ENCODE measurements at regions of chr17 and their contacts with region 1.

Region 1: DNA sequence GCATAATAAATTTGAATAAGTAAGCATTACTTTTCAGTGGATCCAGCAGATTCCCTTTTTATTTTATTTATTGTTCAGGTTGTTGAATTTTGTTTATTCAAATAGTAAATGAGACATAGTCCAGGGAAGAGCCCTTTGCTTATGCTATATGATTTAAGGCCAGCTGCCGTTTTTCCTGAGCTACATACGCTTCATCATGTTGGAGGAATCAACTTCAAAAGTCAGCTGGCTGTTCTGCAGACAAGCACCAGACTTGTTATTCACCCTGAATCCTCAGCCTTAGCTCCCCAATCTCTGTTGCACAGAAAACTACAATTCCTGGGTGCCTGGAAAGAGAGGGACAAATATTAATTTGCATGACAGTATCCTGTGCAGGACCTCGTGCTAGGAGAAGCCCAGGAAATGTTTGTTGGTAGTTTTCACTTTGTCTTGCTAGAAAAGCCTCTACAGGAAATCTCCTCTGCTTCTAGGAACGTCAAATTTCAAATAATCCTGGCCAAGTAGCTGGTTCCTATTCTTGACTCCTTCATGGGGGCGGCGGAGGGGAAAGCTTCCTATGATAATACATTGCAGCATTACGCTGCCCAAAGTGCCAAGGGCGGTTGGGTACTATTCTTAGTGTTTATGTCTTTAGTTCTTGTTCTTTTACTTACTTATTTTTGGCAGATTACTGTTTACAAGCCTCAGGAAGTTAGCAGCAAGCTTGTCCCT is 101.6 kb downstream of the PRKCA start:
- DNase-seq: no peak
- ATAC-seq: no peak
- H3K4me3 Mint-ChIP-seq: no peak overlapping the region
- H3K27ac Mint-ChIP-seq: peak overlapping the region; percentile 9
- H3K4me1 Mint-ChIP-seq: peaks cover 87% of the 10 kb centered on the region
- H3K27me3 Mint-ChIP-seq: no peaks in the 10 kb centered on the region

Region 2: DNA sequence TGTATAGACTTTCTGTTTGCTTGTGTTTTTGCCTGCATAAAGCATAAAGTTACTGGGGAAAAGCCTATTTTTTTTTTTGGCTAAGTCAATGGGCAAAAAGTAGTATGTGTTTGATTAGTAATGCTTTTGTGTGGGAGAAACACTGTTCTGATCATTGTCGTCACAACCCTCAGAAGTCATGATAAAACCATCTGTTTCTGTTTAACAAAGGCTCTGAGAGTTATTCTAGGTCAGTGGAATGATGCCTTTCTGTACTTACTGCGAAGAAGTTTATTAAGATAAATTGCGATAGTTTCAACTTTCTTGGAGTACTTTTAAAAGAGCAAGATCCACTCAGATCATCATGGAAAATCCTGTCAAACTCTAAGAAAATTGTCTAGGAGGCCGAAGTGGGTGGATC is 20.7 kb before region 1 on chr17:
- CTCF ChIA-PET with region 1: interaction called, 3 read pairs
- POLR2A ChIA-PET with region 1: no interaction called
- intact Hi-C with region 1: loop called in 1 of 2 experiments (anchors 2 kb)
- DNase-seq: no peak
- ATAC-seq: no peak
- H3K4me3 Mint-ChIP-seq: no peak overlapping the region
- H3K27ac Mint-ChIP-seq: peak overlapping the region; percentile 65
- H3K4me1 Mint-ChIP-seq: peaks cover 73% of the 10 kb centered on the region
- H3K27me3 Mint-ChIP-seq: no peaks in the 10 kb centered on the region

Region 3: GRCh38 chr17:66415366-66416206 is 11.6 kb after region 1 on chr17:
- CTCF ChIA-PET with region 1: interaction called, 19 read pairs
- POLR2A ChIA-PET with region 1: interaction called, 4 read pairs
- intact Hi-C with region 1: loop called in 1 of 2 experiments (anchors 2 kb)
- DNase-seq: no peak
- ATAC-seq: no peak
- H3K4me3 Mint-ChIP-seq: no peak overlapping the region
- H3K27ac Mint-ChIP-seq: no peak overlapping the region
- H3K4me1 Mint-ChIP-seq: peaks cover 64% of the 10 kb centered on the region
- H3K27me3 Mint-ChIP-seq: no peaks in the 10 kb centered on the region

Region 4: GRCh38 chr17:66420961-66421371 is 17.0 kb after region 1 on chr17:
- CTCF ChIA-PET with region 1: interaction called, 19 read pairs
- POLR2A ChIA-PET with region 1: interaction called, 4 read pairs
- intact Hi-C with region 1: loop called in 1 of 2 experiments (anchors 2 kb)
- DNase-seq: no peak
- ATAC-seq: peak; percentile 60
- H3K4me3 Mint-ChIP-seq: no peak overlapping the region
- H3K27ac Mint-ChIP-seq: no peak overlapping the region
- H3K4me1 Mint-ChIP-seq: peaks cover 75% of the 10 kb centered on the region
- H3K27me3 Mint-ChIP-seq: no peaks in the 10 kb centered on the region

Region 5: DNA sequence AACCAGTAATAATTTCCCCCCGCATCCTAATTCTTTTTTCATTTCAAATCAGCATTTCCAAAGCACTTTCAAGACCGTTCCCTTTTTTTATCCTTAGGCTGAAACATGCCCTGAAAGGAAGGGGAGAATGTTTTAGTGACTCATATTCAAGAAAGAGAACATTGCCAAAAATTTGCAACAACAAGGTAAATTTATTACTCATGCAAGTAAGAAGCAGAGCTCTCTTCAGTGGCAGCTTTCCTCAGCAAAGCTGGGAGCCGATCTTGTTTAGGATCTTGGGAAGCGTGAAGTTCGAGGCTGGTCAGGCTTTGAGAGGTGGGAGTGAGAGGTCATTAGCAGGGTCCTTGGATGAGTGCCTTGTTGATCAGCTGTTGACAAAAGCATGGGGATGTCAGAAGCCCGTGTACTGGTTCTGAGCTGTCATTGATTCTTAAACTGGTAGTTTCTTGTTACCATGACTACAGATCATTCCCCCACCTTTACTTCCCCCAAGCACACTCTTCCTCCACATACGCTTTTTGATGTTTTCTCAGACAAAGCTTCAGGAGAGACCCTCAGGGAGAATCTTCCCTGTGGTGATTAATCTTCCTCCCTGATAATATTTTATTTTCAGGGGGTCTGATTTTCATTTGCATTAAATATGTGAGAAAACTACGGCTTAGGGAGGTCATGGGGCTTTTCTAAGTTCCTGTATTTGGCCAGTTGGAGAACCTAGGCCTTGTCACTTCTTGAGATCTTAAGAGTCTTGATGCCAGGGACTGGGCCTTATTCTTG is 28.1 kb after region 1 on chr17:
- CTCF ChIA-PET with region 1: no interaction called
- POLR2A ChIA-PET with region 1: no interaction called
- intact Hi-C with region 1: no loop called
- DNase-seq: no peak
- ATAC-seq: no peak
- H3K4me3 Mint-ChIP-seq: no peak overlapping the region
- H3K27ac Mint-ChIP-seq: no peak overlapping the region
- H3K4me1 Mint-ChIP-seq: peaks cover 46% of the 10 kb centered on the region
- H3K27me3 Mint-ChIP-seq: no peaks in the 10 kb centered on the region

Region 6: GRCh38 chr17:66451188-66452169 is 47.5 kb after region 1 on chr17:
- CTCF ChIA-PET with region 1: no interaction called
- POLR2A ChIA-PET with region 1: no interaction called
- intact Hi-C with region 1: no loop called
- DNase-seq: no peak
- ATAC-seq: no peak
- H3K4me3 Mint-ChIP-seq: no peak overlapping the region
- H3K27ac Mint-ChIP-seq: no peak overlapping the region
- H3K4me1 Mint-ChIP-seq: peaks cover 47% of the 10 kb centered on the region
- H3K27me3 Mint-ChIP-seq: no peaks in the 10 kb centered on the region

Region 7: GRCh38 chr17:66523378-66524200 is 119.6 kb after region 1 on chr17:
- CTCF ChIA-PET with region 1: no interaction called
- POLR2A ChIA-PET with region 1: no interaction called
- intact Hi-C with region 1: no loop called
- DNase-seq: no peak
- ATAC-seq: no peak
- H3K4me3 Mint-ChIP-seq: no peak overlapping the region
- H3K27ac Mint-ChIP-seq: no peak overlapping the region
- H3K4me1 Mint-ChIP-seq: peaks cover 58% of the 10 kb centered on the region
- H3K27me3 Mint-ChIP-seq: no peaks in the 10 kb centered on the region